Right ventricle myocardium inferior (tissue), 1 donor: ENCODE measurements at regions of chr1 and their contacts with region 1.

Region 1: DNA sequence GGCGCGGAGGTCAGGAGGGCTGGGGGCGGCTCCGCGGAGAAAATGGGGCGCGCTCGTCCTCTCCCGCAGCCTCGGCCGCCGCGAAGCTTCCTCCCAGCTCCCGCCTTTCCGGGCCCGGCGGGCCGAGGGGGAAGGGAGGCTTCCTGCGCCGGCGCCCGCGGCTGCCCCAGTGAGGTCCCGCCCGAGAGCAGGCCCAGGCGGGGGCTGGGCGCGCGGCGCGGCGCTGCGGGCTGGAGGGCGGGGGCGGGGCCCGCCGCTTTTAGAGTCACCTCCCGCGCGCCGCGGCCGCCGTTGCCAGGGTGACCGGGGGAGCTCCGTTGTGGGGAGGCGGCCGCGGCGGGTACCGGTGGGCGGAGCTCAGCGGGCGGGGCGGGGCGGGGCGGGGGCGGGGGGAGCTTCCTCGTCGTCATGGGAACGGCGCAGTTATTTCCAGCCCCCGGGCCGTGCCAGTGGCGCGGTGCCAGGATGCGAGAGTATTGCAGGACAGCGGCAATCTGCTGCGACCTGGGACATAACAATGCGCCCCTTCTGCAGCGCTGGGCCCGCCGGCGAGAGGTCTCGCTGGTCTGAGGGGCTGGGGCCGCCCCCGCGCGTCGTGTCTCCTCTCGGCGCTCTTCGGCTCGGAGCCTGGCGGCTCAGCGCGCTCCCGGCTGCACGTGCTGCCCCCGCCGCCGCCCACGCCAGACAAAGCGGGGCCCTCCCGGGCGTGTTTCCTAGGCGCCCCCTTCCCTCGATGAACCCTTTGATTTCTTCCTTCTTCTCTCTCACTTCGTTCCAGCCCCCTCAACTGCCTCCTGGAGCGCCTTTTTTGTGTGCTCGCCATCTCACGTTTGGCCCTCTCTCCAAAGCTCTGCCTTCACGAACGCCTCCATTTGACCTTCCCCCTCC is 16.9 kb downstream of the IER5 start:
- DNase-seq: peak; percentile 99
- ATAC-seq: peak; percentile 98

Region 2: GRCh38 chr1:181062836-181063428 is 42.4 kb before region 1 on chr1:
- intact Hi-C with region 1: no loop called
- DNase-seq: no peak
- ATAC-seq: peak; percentile 59

Region 3: DNA sequence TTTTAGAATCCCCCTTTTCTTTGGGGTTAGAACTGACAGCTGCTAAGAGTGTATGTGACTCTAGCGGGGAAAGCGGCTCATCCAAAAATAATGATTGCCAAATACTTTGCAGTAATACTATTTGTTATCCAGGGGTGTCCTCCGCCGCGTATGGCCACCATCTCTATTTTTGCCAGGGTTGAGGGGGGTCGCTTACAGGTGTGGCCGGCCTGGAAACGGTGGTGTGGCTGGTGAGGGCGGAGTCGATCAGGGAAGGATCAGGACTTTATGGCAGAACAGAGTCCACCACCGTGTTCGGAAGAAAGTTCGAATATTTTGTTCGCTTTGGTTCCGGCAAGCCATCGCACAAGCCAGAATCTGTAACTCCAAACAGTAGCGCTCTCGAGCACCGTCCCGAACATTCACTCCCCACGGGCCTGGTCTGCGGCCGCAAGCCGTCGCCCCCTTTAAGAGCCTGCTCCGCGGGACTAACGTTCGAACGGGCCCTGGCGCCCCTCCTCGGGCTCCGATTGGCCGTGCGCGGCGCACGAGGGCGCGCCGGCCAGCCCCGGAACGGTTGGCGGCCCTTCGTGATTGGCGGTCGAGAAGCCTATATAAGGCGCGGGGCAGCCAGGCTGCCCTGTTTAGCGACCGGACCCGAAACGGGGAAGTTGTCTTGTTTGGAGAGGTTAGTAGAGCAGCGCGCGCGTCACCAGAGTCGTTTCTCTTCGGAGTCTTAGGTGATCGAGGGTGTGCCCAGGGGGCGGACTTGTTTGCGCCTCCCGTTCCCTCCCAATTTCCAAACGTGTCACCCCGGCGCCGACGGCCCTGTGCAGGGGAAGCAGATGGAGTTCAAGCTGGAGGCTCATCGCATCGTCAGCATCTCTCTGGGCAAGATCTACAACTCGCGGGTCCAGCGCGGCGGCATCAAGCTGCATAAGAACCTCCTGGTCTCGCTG is 17.0 kb before region 1 on chr1 and contains the start of gene IER5:
- intact Hi-C with region 1: loop called (anchors 2 kb)
- DNase-seq: peak; percentile 98
- ATAC-seq: peak; percentile 95
- total RNA-seq, gene IER5: 14.3 TPM

Region 4: DNA sequence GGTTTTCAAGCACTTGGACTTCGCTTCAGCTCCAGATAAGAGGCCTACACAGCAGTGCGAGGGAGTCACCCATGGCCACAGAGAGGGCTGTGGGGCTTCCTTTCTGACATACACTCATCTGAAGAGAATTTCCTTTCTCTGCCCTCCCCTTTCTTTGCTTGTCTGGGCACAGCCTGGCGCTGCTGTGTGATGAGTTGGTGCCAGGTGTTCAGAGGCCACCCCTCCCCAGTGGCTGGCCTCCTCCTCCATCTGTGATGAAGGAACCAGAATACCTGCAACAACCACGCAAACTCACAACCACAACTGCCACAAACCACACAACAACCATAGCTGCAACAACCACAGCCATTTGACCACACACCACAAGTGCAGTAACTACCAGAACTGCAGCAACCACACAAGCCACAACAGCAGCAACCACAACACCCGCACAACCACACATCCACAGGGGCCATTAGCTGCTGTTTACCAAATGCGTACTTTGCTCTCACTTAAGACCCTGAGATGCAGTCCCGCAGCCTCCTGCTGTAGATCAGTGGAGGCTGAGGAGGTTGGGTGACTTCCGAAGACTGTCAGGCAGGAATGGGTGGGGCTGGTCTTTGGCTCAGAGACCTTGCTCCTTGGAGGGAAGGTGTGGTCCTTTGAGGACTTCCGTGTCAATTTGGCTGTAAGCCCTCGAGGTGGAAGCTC is 54.2 kb after region 1 on chr1:
- intact Hi-C with region 1: no loop called
- DNase-seq: no peak
- ATAC-seq: peak; percentile 30